Psoas muscle (tissue), 8 donors: ENCODE measurements at regions of chr16 and their contacts with region 1.

Region 1: DNA sequence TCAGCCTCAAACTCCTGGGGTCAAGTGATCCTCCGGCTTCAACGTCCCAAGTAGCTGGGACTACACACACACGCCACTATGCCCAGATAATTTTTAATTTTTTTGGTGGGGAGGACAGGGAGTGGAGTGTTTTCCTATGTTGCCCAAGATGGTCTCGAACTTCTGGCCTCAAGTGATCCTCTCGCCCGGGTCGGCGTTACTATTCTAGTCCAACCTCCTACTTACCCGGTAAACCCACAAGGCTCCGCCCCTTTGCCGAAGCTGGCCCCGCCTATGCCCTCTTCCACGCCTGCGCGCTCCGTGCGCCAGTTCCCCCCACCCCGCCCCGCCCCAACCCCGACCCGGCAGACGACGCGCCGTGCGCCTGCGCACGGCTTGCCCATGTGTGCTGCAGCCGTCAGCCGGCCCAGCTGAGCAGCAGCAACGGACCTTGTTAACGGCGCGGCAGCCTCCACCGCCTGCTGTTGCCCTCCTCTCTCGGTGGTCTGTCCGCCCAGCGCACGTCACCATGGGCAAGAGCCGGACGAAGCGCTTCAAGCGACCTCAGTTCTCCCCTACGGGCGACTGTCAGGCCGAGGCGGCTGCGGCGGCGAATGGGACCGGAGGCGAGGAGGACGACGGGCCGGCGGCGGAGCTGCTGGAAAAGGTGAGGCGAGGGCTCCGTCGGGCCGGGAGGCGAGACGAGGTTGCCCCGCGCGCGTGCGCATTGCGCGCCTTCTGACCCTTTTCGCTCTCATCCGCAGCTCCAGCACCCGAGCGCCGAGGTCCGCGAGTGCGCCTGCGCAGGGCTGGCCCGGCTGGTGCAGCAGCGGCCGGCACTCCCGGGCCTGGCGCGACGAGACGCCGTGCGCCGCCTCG is at the start of gene HEATR3:
- DNase-seq: peak; percentile 92 to 97
- ATAC-seq: peak; percentile 95 to 97 (median 96)
- H3K4me3 ChIP-seq: peak within 1 kb of the TSS; percentile 91
- H3K27ac ChIP-seq: peak within 1 kb of the TSS; percentile 94
- H3K4me1 ChIP-seq: peaks cover 22% of the 10 kb centered on the region
- H3K27me3 ChIP-seq: no peaks in the 10 kb centered on the region
- CTCF ChIP-seq: no peak
- total RNA-seq, gene HEATR3: 9.2 to 20.9 (median 13.4) TPM

Region 2: GRCh38 chr16:50152807-50153452 is 87.1 kb after region 1 on chr16 and contains the start of gene TENT4B:
- intact Hi-C with region 1: loop called (anchors 5 kb)
- DNase-seq: peak; percentile 89 to 93
- ATAC-seq: peak; percentile 90 to 94 (median 92)
- H3K4me3 ChIP-seq: peak within 1 kb of the TSS; percentile 92
- H3K27ac ChIP-seq: peak within 1 kb of the TSS; percentile 99
- H3K4me1 ChIP-seq: peaks cover 30% of the 10 kb centered on the region
- H3K27me3 ChIP-seq: no peaks in the 10 kb centered on the region
- CTCF ChIP-seq: no peak
- total RNA-seq, gene TENT4B: 6.8 to 8.1 (median 7.1) TPM

Region 3: GRCh38 chr16:50166511-50167500 is 101.0 kb after region 1 on chr16:
- intact Hi-C with region 1: no loop called
- DNase-seq: no peak
- ATAC-seq: peak in 3 of 4 donors; percentile 32 to 71 (median 69)
- H3K4me3 ChIP-seq: no peak overlapping the region
- H3K27ac ChIP-seq: no peak overlapping the region
- H3K4me1 ChIP-seq: peaks cover 20% of the 10 kb centered on the region
- H3K27me3 ChIP-seq: no peaks in the 10 kb centered on the region
- CTCF ChIP-seq: no peak

Region 4: GRCh38 chr16:50185005-50185505 is 119.2 kb after region 1 on chr16:
- intact Hi-C with region 1: no loop called
- DNase-seq: no peak
- ATAC-seq: no peak
- H3K4me3 ChIP-seq: no peak overlapping the region
- H3K27ac ChIP-seq: no peak overlapping the region
- H3K4me1 ChIP-seq: peaks cover 7% of the 10 kb centered on the region
- H3K27me3 ChIP-seq: no peaks in the 10 kb centered on the region
- CTCF ChIP-seq: no peak